Activated CD4-positive, alpha-beta memory T cell treated with anti-CD3 and anti-CD28 coated beads for 36 hours (primary cell): ENCODE measurements at regions of chr1 and their contacts with region 1.

Region 1: GRCh38 chr1:247390116-247390791 is 25.7 kb upstream of the NLRP3 start:
- DNase-seq: peak; percentile 89
- H3K4me3 Mint-ChIP-seq: peak overlapping the region; percentile 14
- H3K27ac Mint-ChIP-seq: peak overlapping the region; percentile 10
- H3K4me1 Mint-ChIP-seq: peaks cover 18% of the 10 kb centered on the region
- H3K27me3 Mint-ChIP-seq: peaks cover 2% of the 10 kb centered on the region

Region 2: GRCh38 chr1:247373721-247374141 is 16.5 kb before region 1 on chr1:
- CTCF ChIA-PET with region 1: interaction called, 27 read pairs
- POLR2A ChIA-PET with region 1: no interaction called
- intact Hi-C with region 1: loop called (anchors 1 kb)
- DNase-seq: peak; percentile 67
- H3K4me3 Mint-ChIP-seq: no peak overlapping the region
- H3K27ac Mint-ChIP-seq: no peak overlapping the region
- H3K4me1 Mint-ChIP-seq: peaks cover 2% of the 10 kb centered on the region
- H3K27me3 Mint-ChIP-seq: peaks cover 8% of the 10 kb centered on the region

Region 3: DNA sequence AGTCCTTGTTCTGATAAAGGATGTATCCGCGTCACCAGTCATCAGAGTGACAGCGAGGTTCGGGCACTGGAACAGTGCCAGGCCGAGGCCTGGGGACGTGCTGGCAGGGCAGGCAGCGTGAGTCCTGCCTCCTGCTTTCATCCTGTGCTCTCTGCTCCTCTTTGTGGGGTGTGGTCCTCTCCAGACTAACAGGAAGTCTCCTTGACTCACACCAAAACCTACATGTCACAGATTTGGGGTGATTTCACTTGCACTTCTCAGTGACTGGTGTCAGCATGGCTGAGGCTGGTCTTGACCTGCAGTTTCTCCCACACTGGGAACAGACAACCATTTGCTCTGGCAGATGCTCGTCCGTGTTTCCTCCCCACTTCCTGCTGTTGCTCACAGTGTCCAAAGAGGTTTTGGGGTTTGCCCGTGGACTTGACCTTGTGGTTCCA is 16.9 kb after region 1 on chr1:
- CTCF ChIA-PET with region 1: interaction called, 12 read pairs
- POLR2A ChIA-PET with region 1: interaction called, 5 read pairs
- intact Hi-C with region 1: loop called (anchors 1 kb)
- DNase-seq: peak; percentile 82
- H3K4me3 Mint-ChIP-seq: peak overlapping the region; percentile 45
- H3K27ac Mint-ChIP-seq: peak overlapping the region; percentile 63
- H3K4me1 Mint-ChIP-seq: peaks cover 43% of the 10 kb centered on the region
- H3K27me3 Mint-ChIP-seq: peaks cover 6% of the 10 kb centered on the region

Region 4: DNA sequence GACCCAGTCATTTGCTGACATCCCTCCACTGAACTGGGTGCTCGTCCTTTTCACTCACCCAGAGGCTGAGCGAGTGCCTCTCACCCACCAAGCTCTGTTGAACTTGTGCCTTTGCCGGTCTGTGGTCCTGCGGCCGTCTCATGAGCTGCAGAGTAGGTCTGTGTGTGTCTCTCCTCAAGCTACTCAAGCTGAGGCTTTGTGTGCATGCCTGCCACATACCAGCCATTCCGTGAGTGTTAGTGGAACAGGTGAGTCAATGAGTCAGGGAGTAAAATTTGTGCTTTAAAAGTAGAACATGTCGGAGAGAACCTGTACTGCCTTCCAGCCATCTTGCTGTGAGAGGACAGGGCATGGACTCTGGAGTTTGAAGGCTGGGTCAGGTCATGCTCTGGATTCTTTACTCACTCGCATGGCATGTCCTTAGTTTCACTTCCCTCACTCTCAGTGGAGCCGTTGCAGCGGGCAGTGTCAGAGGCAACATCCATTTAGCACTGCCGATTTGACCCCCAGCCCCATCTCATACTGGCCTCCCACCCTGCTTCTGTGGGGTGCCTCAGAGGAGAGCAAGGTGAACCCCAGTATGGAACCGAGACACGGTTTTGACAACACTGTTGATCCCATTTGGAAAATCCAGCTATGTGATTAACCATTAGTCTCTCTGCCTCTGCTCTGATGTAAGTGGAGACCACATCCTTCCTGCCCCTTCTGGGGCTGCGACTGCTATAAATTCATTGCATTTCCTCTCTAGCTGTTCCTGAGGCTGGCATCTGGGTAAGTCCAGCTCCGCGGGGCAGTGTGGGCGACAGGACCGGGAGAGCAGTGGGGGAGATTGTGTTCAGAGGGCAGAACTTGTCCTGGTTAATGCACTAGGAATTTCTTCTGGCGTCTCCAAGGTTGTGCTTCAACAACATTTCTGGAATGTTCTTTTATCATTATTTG is 25.4 kb after region 1 on chr1 and contains the start of gene NLRP3:
- CTCF ChIA-PET with region 1: interaction called, 20 read pairs
- POLR2A ChIA-PET with region 1: interaction called, 4 read pairs
- intact Hi-C with region 1: no loop called
- DNase-seq: peak; percentile 59
- H3K4me3 Mint-ChIP-seq: peak within 1 kb of the TSS; percentile 72
- H3K27ac Mint-ChIP-seq: peak within 1 kb of the TSS; percentile 60
- H3K4me1 Mint-ChIP-seq: peaks cover 48% of the 10 kb centered on the region
- H3K27me3 Mint-ChIP-seq: peaks cover 6% of the 10 kb centered on the region
- total RNA-seq, gene NLRP3: 0.97 to 1.5 TPM

Region 5: GRCh38 chr1:247421074-247421473 is 30.8 kb after region 1 on chr1:
- CTCF ChIA-PET with region 1: interaction called, 20 read pairs
- POLR2A ChIA-PET with region 1: interaction called, 4 read pairs
- intact Hi-C with region 1: loop called (anchors 1 kb)
- DNase-seq: peak; percentile 68
- H3K4me3 Mint-ChIP-seq: no peak overlapping the region
- H3K27ac Mint-ChIP-seq: no peak overlapping the region
- H3K4me1 Mint-ChIP-seq: peaks cover 49% of the 10 kb centered on the region
- H3K27me3 Mint-ChIP-seq: no peaks in the 10 kb centered on the region

Region 6: GRCh38 chr1:247471445-247472016 is 81.3 kb after region 1 on chr1:
- CTCF ChIA-PET with region 1: no interaction called
- POLR2A ChIA-PET with region 1: no interaction called
- intact Hi-C with region 1: no loop called
- DNase-seq: no peak
- H3K4me3 Mint-ChIP-seq: no peak overlapping the region
- H3K27ac Mint-ChIP-seq: no peak overlapping the region
- H3K4me1 Mint-ChIP-seq: peaks cover 3% of the 10 kb centered on the region
- H3K27me3 Mint-ChIP-seq: peaks cover 7% of the 10 kb centered on the region

Region 7: GRCh38 chr1:247487057-247487456 is 96.8 kb after region 1 on chr1:
- CTCF ChIA-PET with region 1: interaction called, 65 read pairs
- POLR2A ChIA-PET with region 1: no interaction called
- intact Hi-C with region 1: loop called (anchors 1 kb)
- DNase-seq: peak; percentile 26
- H3K4me3 Mint-ChIP-seq: no peak overlapping the region
- H3K27ac Mint-ChIP-seq: no peak overlapping the region
- H3K4me1 Mint-ChIP-seq: no peaks in the 10 kb centered on the region
- H3K27me3 Mint-ChIP-seq: peaks cover 7% of the 10 kb centered on the region

Region 8: DNA sequence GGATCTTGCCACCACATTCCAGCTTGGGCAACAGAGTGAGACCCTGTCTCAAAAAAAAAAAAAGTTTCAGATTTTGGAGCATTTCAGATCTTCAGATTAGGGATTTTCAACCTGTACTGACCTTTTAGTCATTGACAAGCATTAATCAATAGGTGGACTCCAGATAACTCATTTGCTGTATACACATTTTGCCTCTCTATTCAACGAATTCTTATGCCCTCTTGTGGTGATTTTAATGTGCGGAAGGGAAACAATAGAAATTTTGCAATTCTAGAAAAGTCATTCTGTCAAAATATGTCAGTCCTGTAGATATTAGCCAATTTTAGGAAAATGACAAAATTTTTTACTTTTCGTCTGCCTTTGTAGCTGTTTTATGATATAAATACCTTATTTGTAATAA is 186.2 kb after region 1 on chr1:
- CTCF ChIA-PET with region 1: interaction called, 8 read pairs
- POLR2A ChIA-PET with region 1: no interaction called
- intact Hi-C with region 1: loop called (anchors 1 kb)
- DNase-seq: no peak
- H3K4me3 Mint-ChIP-seq: no peak overlapping the region
- H3K27ac Mint-ChIP-seq: no peak overlapping the region
- H3K4me1 Mint-ChIP-seq: no peaks in the 10 kb centered on the region
- H3K27me3 Mint-ChIP-seq: peaks cover 7% of the 10 kb centered on the region